ENCODE measurements at regions of chr15 and their contacts with region 1.

Region 1: GRCh38 chr15:73972984-73973682 is 19.0 kb downstream of the STOML1 start:
- DNase-seq: peak; percentile 58 to 86 (median 74)
- ATAC-seq: peak; percentile 83
- H3K4me3 ChIP-seq: peak overlapping the region in 1 of 2 experiments; percentile 24
- H3K4me3 Mint-ChIP-seq: peak overlapping the region; percentile 11
- H3K27ac ChIP-seq: no peak overlapping the region
- H3K27ac Mint-ChIP-seq: no peak overlapping the region
- H3K4me1 ChIP-seq: peaks cover 26% of the 10 kb centered on the region
- H3K4me1 Mint-ChIP-seq: peaks cover 26% of the 10 kb centered on the region
- H3K27me3 ChIP-seq: peaks cover 0 to 11% of the 10 kb centered on the region in 2 experiments
- H3K27me3 Mint-ChIP-seq: peaks cover 18% of the 10 kb centered on the region
- CTCF ChIP-seq: peak; percentile 68

Region 2: GRCh38 chr15:74007820-74008371 is 34.8 kb after region 1 on chr15:
- CTCF ChIA-PET with region 1: interaction called, 12 read pairs
- POLR2A ChIA-PET with region 1: no interaction called
- intact Hi-C with region 1: loop called in 1 of 2 experiments (anchors 5 kb)
- DNase-seq: peak in 1 of 9 experiments; percentile 42
- ATAC-seq: peak; percentile 62
- H3K4me3 ChIP-seq: no peak overlapping the region
- H3K4me3 Mint-ChIP-seq: peak overlapping the region; percentile 56
- H3K27ac ChIP-seq: no peak overlapping the region
- H3K27ac Mint-ChIP-seq: peak overlapping the region; percentile 86
- H3K4me1 ChIP-seq: peaks cover 33% of the 10 kb centered on the region
- H3K4me1 Mint-ChIP-seq: peaks cover 65% of the 10 kb centered on the region
- H3K27me3 ChIP-seq: no peaks in the 10 kb centered on the region
- H3K27me3 Mint-ChIP-seq: no peaks in the 10 kb centered on the region
- CTCF ChIP-seq: no peak

Region 3: GRCh38 chr15:74036271-74037170 is 63.4 kb after region 1 on chr15:
- CTCF ChIA-PET with region 1: interaction called, 5 read pairs
- POLR2A ChIA-PET with region 1: no interaction called
- intact Hi-C with region 1: loop called (anchors 1 to 5 kb)
- DNase-seq: no peak
- ATAC-seq: no peak
- H3K4me3 ChIP-seq: no peak overlapping the region
- H3K4me3 Mint-ChIP-seq: no peak overlapping the region
- H3K27ac ChIP-seq: no peak overlapping the region
- H3K27ac Mint-ChIP-seq: no peak overlapping the region
- H3K4me1 ChIP-seq: no peaks in the 10 kb centered on the region
- H3K4me1 Mint-ChIP-seq: no peaks in the 10 kb centered on the region
- H3K27me3 ChIP-seq: no peaks in the 10 kb centered on the region
- H3K27me3 Mint-ChIP-seq: no peaks in the 10 kb centered on the region
- CTCF ChIP-seq: no peak

Region 4: GRCh38 chr15:74053941-74054529 is 80.9 kb after region 1 on chr15:
- CTCF ChIA-PET with region 1: interaction called, 30 read pairs
- POLR2A ChIA-PET with region 1: interaction called, 5 read pairs
- intact Hi-C with region 1: no loop called
- DNase-seq: peak; percentile 26 to 80 (median 70)
- ATAC-seq: peak; percentile 100
- H3K4me3 ChIP-seq: no peak overlapping the region
- H3K4me3 Mint-ChIP-seq: no peak overlapping the region
- H3K27ac ChIP-seq: no peak overlapping the region
- H3K27ac Mint-ChIP-seq: no peak overlapping the region
- H3K4me1 ChIP-seq: peaks cover 7% of the 10 kb centered on the region
- H3K4me1 Mint-ChIP-seq: peaks cover 21% of the 10 kb centered on the region
- H3K27me3 ChIP-seq: no peaks in the 10 kb centered on the region
- H3K27me3 Mint-ChIP-seq: no peaks in the 10 kb centered on the region
- CTCF ChIP-seq: no peak

Region 5: GRCh38 chr15:74127260-74127953 is 154.3 kb after region 1 on chr15:
- CTCF ChIA-PET with region 1: interaction called, 3 read pairs
- POLR2A ChIA-PET with region 1: no interaction called
- intact Hi-C with region 1: loop called in 1 of 2 experiments (anchors 5 kb)
- DNase-seq: peak; percentile 72 to 94 (median 82)
- ATAC-seq: peak; percentile 90
- H3K4me3 ChIP-seq: no peak overlapping the region
- H3K4me3 Mint-ChIP-seq: no peak overlapping the region
- H3K27ac ChIP-seq: no peak overlapping the region
- H3K27ac Mint-ChIP-seq: no peak overlapping the region
- H3K4me1 ChIP-seq: peaks cover 25% of the 10 kb centered on the region
- H3K4me1 Mint-ChIP-seq: peaks cover 26% of the 10 kb centered on the region
- H3K27me3 ChIP-seq: peaks cover 27 to 39% of the 10 kb centered on the region in 2 experiments
- H3K27me3 Mint-ChIP-seq: peaks cover 61% of the 10 kb centered on the region
- CTCF ChIP-seq: peak; percentile 87

Region 6: DNA sequence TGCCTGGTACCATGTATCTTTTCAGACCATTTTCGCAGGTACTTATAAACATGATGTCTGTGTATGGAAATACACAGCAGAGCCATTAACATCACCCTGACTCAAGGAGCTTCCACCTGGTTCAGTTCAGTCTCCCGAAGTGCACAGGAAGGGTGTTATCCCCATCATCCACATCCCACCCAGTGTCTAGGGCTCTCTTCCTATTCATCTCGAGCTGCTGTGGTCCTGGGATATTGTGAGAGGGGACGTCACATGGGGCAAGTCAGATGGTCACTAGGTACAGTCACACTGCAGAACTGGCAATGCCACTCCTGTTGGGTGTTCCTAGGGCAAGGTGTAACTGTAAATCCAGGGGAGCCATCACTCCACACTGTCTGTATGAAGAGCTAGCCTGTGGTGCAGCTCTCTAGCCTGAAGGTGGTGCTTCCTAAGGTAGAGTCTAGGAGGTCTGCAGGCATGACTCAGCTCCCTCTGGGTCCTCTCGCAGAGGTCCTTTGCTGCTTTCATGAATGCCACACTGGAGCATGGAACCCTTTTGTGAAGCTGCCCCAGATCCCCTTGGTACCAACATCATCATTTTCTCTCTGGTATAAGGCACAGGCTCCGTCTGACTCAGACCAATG is 171.1 kb after region 1 on chr15:
- CTCF ChIA-PET with region 1: no interaction called
- POLR2A ChIA-PET with region 1: no interaction called
- intact Hi-C with region 1: no loop called
- DNase-seq: no peak
- ATAC-seq: no peak
- H3K4me3 ChIP-seq: no peak overlapping the region
- H3K4me3 Mint-ChIP-seq: no peak overlapping the region
- H3K27ac ChIP-seq: no peak overlapping the region
- H3K27ac Mint-ChIP-seq: no peak overlapping the region
- H3K4me1 ChIP-seq: no peaks in the 10 kb centered on the region
- H3K4me1 Mint-ChIP-seq: no peaks in the 10 kb centered on the region
- H3K27me3 ChIP-seq: peaks cover 0 to 5% of the 10 kb centered on the region in 2 experiments
- H3K27me3 Mint-ChIP-seq: peaks cover 35% of the 10 kb centered on the region
- CTCF ChIP-seq: no peak

Region 7: GRCh38 chr15:74322181-74323076 is 349.3 kb after region 1 on chr15:
- CTCF ChIA-PET with region 1: interaction called, 11 read pairs
- POLR2A ChIA-PET with region 1: no interaction called
- intact Hi-C with region 1: loop called (anchors 1 kb)
- DNase-seq: peak; percentile 42 to 79 (median 57)
- ATAC-seq: peak; percentile 82
- H3K4me3 ChIP-seq: no peak overlapping the region
- H3K4me3 Mint-ChIP-seq: no peak overlapping the region
- H3K27ac ChIP-seq: no peak overlapping the region
- H3K27ac Mint-ChIP-seq: no peak overlapping the region
- H3K4me1 ChIP-seq: peaks cover 34% of the 10 kb centered on the region
- H3K4me1 Mint-ChIP-seq: peaks cover 22% of the 10 kb centered on the region
- H3K27me3 ChIP-seq: no peaks in the 10 kb centered on the region
- H3K27me3 Mint-ChIP-seq: peaks cover 4% of the 10 kb centered on the region
- CTCF ChIP-seq: peak; percentile 69